ENCODE measurements at regions of chr18 and their contacts with region 1.

Region 1: DNA sequence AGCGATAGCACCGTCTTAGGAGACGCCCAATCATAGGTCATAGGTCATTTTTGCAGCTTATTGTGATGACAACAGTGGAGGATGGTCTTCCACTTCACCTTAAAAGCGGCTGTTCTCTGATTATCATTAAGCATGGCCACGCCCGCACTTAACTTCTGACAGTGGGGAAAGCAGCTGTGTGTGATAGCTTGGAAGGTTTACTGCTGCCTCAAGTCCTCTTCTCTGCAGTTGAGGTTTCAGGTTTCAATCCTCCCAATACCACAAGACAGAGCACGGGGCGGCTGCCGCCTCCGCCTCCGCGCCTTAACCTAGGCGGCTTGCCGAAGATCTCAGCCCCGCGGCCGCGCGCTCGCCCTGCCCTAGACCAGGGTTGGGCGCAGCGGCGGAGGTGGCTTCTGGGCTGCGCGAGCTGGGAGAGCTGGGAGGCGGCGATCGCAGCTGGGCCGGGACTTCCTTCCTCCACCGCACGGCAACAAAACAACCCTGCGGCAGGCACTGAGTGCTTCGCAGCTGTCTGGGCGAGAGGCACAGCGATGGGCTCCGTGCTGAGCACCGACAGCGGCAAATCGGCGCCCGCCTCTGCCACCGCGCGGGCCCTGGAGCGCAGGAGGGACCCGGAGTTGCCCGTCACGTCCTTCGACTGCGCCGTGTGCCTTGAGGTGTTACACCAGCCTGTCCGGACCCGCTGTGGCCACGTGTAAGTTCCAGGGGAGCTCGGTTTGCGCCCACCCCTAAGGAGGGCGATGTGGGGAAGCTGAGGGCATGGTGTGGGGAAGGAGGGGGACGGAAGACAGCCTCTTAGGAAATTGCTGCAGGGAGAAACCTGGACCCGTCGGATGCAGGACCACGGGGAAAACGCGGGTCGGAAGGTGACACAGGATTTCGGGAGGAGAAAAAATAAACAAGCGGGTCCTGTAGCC is at the start of gene RNF125:
- DNase-seq: peak; percentile 69
- H3K4me3 ChIP-seq: peak within 1 kb of the TSS; percentile 34 to 57 (median 42)
- H3K27ac ChIP-seq: no peak within 1 kb of the TSS
- H3K4me1 ChIP-seq: peaks cover 11% of the 10 kb centered on the region
- H3K27me3 ChIP-seq: peaks cover 1 to 2% of the 10 kb centered on the region in 2 experiments
- CTCF ChIP-seq: no peak
- POLR2A ChIP-seq: no peak
- total RNA-seq, gene RNF125: 0.92 and 1.3 TPM in 2 replicates

Region 2: GRCh38 chr18:31857526-31858106 is 161.0 kb before region 1 on chr18:
- CTCF ChIA-PET with region 1: no interaction called
- POLR2A ChIA-PET with region 1: no interaction called
- dilution Hi-C with region 1: no loop called
- intact Hi-C with region 1: no loop called
- DNase-seq: peak; percentile 65
- H3K4me3 ChIP-seq: no peak overlapping the region
- H3K27ac ChIP-seq: peak overlapping the region; percentile 12
- H3K4me1 ChIP-seq: peaks cover 15% of the 10 kb centered on the region
- H3K27me3 ChIP-seq: no peaks in the 10 kb centered on the region
- CTCF ChIP-seq: no peak
- POLR2A ChIP-seq: no peak

Region 3: GRCh38 chr18:32072321-32072720 is 53.7 kb after region 1 on chr18:
- CTCF ChIA-PET with region 1: interaction called, 6 read pairs
- POLR2A ChIA-PET with region 1: interaction called, 6 read pairs
- dilution Hi-C with region 1: no loop called
- intact Hi-C with region 1: loop called (anchors 5 kb)
- DNase-seq: peak; percentile 14
- H3K4me3 ChIP-seq: no peak overlapping the region
- H3K27ac ChIP-seq: no peak overlapping the region
- H3K4me1 ChIP-seq: no peaks in the 10 kb centered on the region
- H3K27me3 ChIP-seq: no peaks in the 10 kb centered on the region
- CTCF ChIP-seq: peak; percentile 7 to 34
- POLR2A ChIP-seq: no peak

Region 4: GRCh38 chr18:32083781-32084180 is 65.2 kb after region 1 on chr18:
- CTCF ChIA-PET with region 1: interaction called, 8 read pairs
- POLR2A ChIA-PET with region 1: no interaction called
- dilution Hi-C with region 1: no loop called
- intact Hi-C with region 1: loop called (anchors 2 kb)
- DNase-seq: no peak
- H3K4me3 ChIP-seq: no peak overlapping the region
- H3K27ac ChIP-seq: no peak overlapping the region
- H3K4me1 ChIP-seq: peaks cover 16% of the 10 kb centered on the region
- H3K27me3 ChIP-seq: no peaks in the 10 kb centered on the region
- CTCF ChIP-seq: no peak
- POLR2A ChIP-seq: no peak

Region 5: DNA sequence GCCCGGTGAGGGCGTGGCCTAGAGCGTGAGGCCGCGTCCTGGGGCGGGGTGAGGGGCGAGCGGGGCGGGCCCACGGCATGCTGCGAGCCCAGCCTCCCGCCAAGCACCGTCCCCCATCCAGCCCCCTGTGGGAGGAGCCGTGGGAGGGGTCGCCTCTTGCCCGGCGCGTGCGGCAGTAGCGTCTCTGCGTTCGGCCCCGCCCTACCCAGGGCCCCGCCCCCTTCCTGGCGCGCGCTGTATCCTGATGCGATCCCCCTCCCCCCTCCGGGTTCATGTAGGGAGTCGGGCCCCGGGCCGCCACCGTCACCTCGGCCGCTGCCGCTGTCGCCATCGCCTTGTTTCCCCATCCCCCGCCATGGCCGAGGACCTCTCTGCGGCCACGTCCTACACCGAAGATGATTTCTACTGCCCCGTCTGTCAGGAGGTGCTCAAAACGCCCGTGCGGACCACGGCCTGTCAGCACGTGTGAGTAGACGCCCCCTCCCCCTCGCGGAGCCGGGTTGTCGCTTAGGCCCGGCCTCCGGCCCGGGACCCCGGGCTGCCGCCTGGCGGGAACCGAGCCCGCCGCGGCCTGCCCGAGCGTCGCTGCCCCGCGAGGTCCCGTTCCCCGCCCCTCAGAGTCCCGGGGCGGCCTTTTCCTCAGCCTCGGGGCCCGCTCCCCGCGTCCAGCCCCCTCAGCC is 74.0 kb after region 1 on chr18:
- CTCF ChIA-PET with region 1: interaction called, 3 read pairs
- POLR2A ChIA-PET with region 1: no interaction called
- dilution Hi-C with region 1: no loop called
- intact Hi-C with region 1: loop called (anchors 1 kb)
- DNase-seq: peak; percentile 98
- H3K4me3 ChIP-seq: peak overlapping the region; percentile 30 to 88 (median 81)
- H3K27ac ChIP-seq: peak overlapping the region; percentile 95
- H3K4me1 ChIP-seq: peaks cover 12% of the 10 kb centered on the region
- H3K27me3 ChIP-seq: no peaks in the 10 kb centered on the region
- CTCF ChIP-seq: no peak
- POLR2A ChIP-seq: peak; percentile 73

Region 6: GRCh38 chr18:32138332-32138982 is 119.9 kb after region 1 on chr18:
- CTCF ChIA-PET with region 1: no interaction called
- POLR2A ChIA-PET with region 1: no interaction called
- dilution Hi-C with region 1: no loop called
- intact Hi-C with region 1: loop called (anchors 5 kb)
- DNase-seq: no peak
- H3K4me3 ChIP-seq: no peak overlapping the region
- H3K27ac ChIP-seq: no peak overlapping the region
- H3K4me1 ChIP-seq: no peaks in the 10 kb centered on the region
- H3K27me3 ChIP-seq: no peaks in the 10 kb centered on the region
- CTCF ChIP-seq: no peak
- POLR2A ChIP-seq: no peak

Region 7: GRCh38 chr18:32261003-32261402 is 242.4 kb after region 1 on chr18:
- CTCF ChIA-PET with region 1: no interaction called
- POLR2A ChIA-PET with region 1: no interaction called
- dilution Hi-C with region 1: no loop called
- intact Hi-C with region 1: no loop called
- DNase-seq: no peak
- H3K4me3 ChIP-seq: no peak overlapping the region
- H3K27ac ChIP-seq: no peak overlapping the region
- H3K4me1 ChIP-seq: no peaks in the 10 kb centered on the region
- H3K27me3 ChIP-seq: no peaks in the 10 kb centered on the region
- CTCF ChIP-seq: no peak
- POLR2A ChIP-seq: no peak

Measured in endothelial cell of umbilical vein (primary cell).